CD14-positive monocyte (primary cell): ENCODE measurements at regions of chr13 and their contacts with region 1.

Region 1: GRCh38 chr13:27251166-27252091 is at the start of gene RPL21:
- DNase-seq: peak; percentile 93 to 97 (median 96)
- H3K4me3 ChIP-seq: peak within 1 kb of the TSS; percentile 64 to 94 (median 72)
- H3K4me3 Mint-ChIP-seq: peak within 1 kb of the TSS; percentile 96 to 97
- H3K27ac ChIP-seq: peak within 1 kb of the TSS; percentile 87 to 94
- H3K27ac Mint-ChIP-seq: peak within 1 kb of the TSS; percentile 98 to 99 (median 99)
- H3K4me1 ChIP-seq: peaks cover 11 to 25% of the 10 kb centered on the region in 2 donors
- H3K4me1 Mint-ChIP-seq: peaks cover 25% of the 10 kb centered on the region
- H3K27me3 ChIP-seq: no peaks in the 10 kb centered on the region
- H3K27me3 Mint-ChIP-seq: no peaks in the 10 kb centered on the region
- CTCF ChIP-seq: no peak
- polyA plus RNA-seq, gene RPL21: 1,311 to 1,781 (median 1,417) TPM

Region 2: GRCh38 chr13:26971990-26972887 is 279.2 kb before region 1 on chr13:
- intact Hi-C with region 1: no loop called
- DNase-seq: peak; percentile 15 to 30 (median 23)
- H3K4me3 ChIP-seq: no peak overlapping the region
- H3K4me3 Mint-ChIP-seq: no peak overlapping the region
- H3K27ac ChIP-seq: no peak overlapping the region
- H3K27ac Mint-ChIP-seq: peak overlapping the region in 4 of 7 donors; percentile 5 to 77 (median 42)
- H3K4me1 ChIP-seq: peaks cover 4 to 7% of the 10 kb centered on the region in 2 donors
- H3K4me1 Mint-ChIP-seq: peaks cover 8% of the 10 kb centered on the region
- H3K27me3 ChIP-seq: no peaks in the 10 kb centered on the region
- H3K27me3 Mint-ChIP-seq: peaks cover 0 to 6% (median 1%) of the 10 kb centered on the region in 3 donors
- CTCF ChIP-seq: peak; percentile 46

Region 3: DNA sequence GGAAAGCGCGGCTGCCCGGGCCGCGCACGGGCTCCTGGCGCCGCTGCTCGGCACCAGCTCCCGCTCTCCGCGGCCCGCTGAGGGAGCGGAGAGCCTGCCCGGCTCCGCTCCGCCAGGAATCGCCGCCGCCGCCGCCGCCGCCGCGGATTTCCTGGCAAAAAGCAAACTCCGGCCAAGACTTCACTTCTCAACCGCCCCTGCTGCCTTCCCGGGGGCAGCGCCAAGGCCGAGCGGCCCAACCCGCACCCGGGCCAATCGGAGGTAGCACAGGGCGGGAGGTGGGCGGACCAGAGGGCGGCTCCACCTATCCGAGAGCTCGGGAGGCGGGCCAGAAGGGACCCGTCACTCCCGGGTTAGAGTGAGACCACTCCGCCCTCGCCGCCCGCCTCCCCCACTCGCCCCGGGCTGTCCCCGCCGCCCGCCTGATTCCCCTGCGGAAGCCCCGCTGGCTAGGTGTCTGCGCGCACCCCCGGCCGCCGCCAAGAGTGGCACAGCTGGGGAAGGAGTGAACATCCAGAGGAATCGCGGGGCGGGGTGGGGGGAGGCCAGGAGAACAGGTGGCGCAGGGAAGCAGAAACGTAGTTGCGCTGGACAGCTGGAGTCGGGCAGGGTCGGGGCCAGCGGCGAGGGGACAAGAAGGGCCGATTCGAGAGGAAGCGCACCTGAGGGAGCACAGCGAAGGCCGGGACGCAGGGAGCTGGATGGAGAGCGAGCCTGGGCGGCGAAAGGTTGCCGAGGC is 369.1 kb after region 1 on chr13 and contains the start of gene LNX2:
- intact Hi-C with region 1: loop called in 1 of 2 experiments (anchors 10 kb)
- DNase-seq: peak; percentile 87 to 93 (median 92)
- H3K4me3 ChIP-seq: peak within 1 kb of the TSS; percentile 71 to 93 (median 90)
- H3K4me3 Mint-ChIP-seq: peak within 1 kb of the TSS; percentile 91 to 95
- H3K27ac ChIP-seq: peak within 1 kb of the TSS; percentile 77 to 91
- H3K27ac Mint-ChIP-seq: peak within 1 kb of the TSS; percentile 80 to 94 (median 90)
- H3K4me1 ChIP-seq: peaks cover 31 to 44% of the 10 kb centered on the region in 2 donors
- H3K4me1 Mint-ChIP-seq: peaks cover 60% of the 10 kb centered on the region
- H3K27me3 ChIP-seq: no peaks in the 10 kb centered on the region
- H3K27me3 Mint-ChIP-seq: peaks cover 0 to 3% (median 0%) of the 10 kb centered on the region in 3 donors
- CTCF ChIP-seq: no peak
- polyA plus RNA-seq, gene LNX2: 0.89 to 2.3 (median 1.5) TPM